ENCODE measurements at regions of chr1 and their contacts with region 1.

Region 1: GRCh38 chr1:153494976-153495535 is 34.6 kb upstream of the S100A7 start:
- DNase-seq: peak; percentile 54
- ATAC-seq: peak; percentile 90
- H3K4me3 ChIP-seq: no peak overlapping the region
- H3K27ac ChIP-seq: no peak overlapping the region
- H3K4me1 ChIP-seq: no peaks in the 10 kb centered on the region
- H3K27me3 ChIP-seq: peaks cover 3 to 5% of the 10 kb centered on the region in 2 experiments; a peak in 2 of 5 replicates
- CTCF ChIP-seq: peak; percentile 92
- EP300 ChIP-seq: no peak
- POLR2A ChIP-seq: no peak
- RAD21 ChIP-seq: peak; percentile 58; the same call in 1 of the 2 replicates

Region 2: GRCh38 chr1:153345187-153346076 is 149.6 kb before region 1 on chr1:
- CTCF ChIA-PET with region 1: no interaction called
- POLR2A ChIA-PET with region 1: no interaction called
- in situ Hi-C with region 1: loop called (anchors 5 kb)
- intact Hi-C with region 1: no loop called
- DNase-seq: no peak
- ATAC-seq: no peak
- H3K4me3 ChIP-seq: no peak overlapping the region
- H3K27ac ChIP-seq: no peak overlapping the region
- H3K4me1 ChIP-seq: no peaks in the 10 kb centered on the region
- H3K27me3 ChIP-seq: peaks cover 2 to 6% of the 10 kb centered on the region in 2 experiments; a peak in 2 of 5 replicates
- CTCF ChIP-seq: no peak
- EP300 ChIP-seq: no peak
- POLR2A ChIP-seq: no peak
- RAD21 ChIP-seq: no peak

Region 3: DNA sequence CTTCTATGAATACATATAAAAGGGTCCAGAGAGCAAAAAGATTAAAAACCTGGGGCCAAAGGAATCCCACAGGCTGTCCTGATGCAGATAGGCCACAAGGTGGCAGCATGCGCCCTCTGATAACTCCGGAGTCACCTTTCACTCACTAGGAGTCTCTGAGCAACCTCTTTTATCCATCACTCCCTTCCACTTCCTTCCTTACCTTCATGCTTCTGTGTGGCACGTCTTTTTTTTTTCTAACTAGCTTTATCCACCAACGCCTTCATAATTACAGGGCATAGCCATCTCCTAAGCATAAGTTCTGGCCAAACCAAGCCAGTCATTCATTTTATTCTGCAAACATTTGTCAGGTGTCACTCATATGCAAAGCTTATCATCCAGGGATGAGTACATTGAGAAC is 142.5 kb before region 1 on chr1:
- CTCF ChIA-PET with region 1: interaction called, 34 read pairs
- POLR2A ChIA-PET with region 1: no interaction called
- in situ Hi-C with region 1: loop called (anchors 5 kb)
- intact Hi-C with region 1: loop called (anchors 1 kb)
- DNase-seq: peak; percentile 52
- ATAC-seq: peak; percentile 58
- H3K4me3 ChIP-seq: no peak overlapping the region
- H3K27ac ChIP-seq: no peak overlapping the region
- H3K4me1 ChIP-seq: no peaks in the 10 kb centered on the region
- H3K27me3 ChIP-seq: peaks cover 0 to 2% of the 10 kb centered on the region in 2 experiments; a peak in 3 of 5 replicates
- CTCF ChIP-seq: peak; percentile 81
- EP300 ChIP-seq: no peak
- POLR2A ChIP-seq: no peak
- RAD21 ChIP-seq: peak; percentile 55

Region 4: DNA sequence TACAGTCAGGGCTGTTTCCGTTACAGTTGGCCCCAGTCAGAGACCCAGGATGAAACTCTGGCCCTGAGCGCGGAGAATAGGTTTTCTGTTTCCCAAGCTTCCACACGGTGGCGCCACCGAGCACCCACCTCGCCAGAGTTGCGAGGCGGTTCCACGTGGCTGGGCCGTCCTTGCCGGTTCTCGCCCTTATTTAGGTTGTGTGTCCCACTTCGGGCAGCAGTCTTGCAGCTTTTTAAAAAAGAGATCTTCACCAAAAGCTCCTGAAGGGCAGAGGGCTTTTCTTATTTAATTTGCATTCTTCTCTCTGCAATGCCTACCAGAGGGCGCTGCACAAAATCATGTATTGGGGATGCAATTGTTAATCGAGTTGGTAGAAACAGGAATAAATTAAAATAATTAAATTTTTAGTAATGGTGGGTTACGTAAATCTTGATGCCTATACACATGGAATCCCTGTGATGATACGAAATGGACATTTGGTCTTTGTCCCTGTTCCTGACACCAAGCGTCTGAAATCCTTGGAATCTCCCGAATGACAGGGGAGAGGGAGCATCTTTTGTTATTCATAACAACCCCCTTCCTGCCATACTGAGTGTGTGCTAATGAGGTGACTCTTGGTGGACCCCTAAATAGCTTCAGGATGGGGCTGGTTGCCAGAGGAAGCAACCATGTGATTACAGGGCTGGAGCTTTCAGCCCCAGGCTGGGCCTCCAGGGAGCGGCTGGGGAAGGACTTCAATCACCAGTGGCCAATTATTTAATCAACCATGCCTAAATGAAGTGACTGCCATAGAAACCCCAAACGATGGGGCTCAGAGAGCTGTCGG is 29.0 kb before region 1 on chr1:
- CTCF ChIA-PET with region 1: interaction called, 16 read pairs
- POLR2A ChIA-PET with region 1: no interaction called
- in situ Hi-C with region 1: no loop called
- intact Hi-C with region 1: loop called (anchors 1 kb)
- DNase-seq: peak; percentile 12
- ATAC-seq: peak; percentile 86
- H3K4me3 ChIP-seq: no peak overlapping the region
- H3K27ac ChIP-seq: no peak overlapping the region
- H3K4me1 ChIP-seq: no peaks in the 10 kb centered on the region
- H3K27me3 ChIP-seq: peaks cover 0 to 3% of the 10 kb centered on the region in 2 experiments; a peak in 1 of 5 replicates
- CTCF ChIP-seq: peak; percentile 74
- EP300 ChIP-seq: no peak
- POLR2A ChIP-seq: no peak
- RAD21 ChIP-seq: peak; percentile 49; the same call in 1 of the 2 replicates

Region 5: DNA sequence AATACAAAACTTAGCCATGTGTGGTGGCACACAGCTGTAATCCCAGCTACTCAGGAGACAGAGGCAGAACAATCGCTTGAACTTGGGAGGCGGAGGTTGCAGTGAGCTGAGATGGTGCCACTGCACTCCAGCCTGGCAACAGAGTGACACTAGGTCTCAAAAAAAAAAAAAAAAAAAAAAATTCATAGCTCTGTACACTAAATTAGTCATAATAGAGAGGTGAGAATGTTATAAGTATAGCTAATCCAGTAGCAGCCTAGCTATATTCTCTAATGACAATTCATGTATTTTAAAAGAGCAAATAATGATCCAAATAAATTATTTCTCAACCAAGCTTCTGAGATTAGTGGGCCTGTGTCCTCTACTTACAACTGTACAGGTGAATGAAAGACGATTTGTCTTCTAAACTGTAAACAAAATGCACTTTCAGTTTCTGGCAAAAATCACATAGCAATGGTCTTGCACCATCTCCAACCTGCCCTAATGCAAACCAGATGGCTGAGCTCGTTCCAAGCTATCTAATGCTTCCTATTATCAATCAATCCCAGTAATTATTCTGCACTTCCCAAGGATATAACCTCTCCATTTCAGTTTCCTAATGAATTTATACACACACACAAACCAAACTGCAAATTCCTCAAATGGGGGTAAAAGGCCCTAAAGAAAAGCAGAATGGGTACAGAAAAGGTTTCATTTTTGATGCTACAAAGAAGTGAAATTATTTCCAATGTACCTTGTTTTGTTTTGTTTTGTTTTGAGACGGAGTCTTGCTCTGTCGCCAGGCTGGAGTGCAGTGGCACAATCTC is 371.2 kb after region 1 on chr1:
- CTCF ChIA-PET with region 1: no interaction called
- POLR2A ChIA-PET with region 1: no interaction called
- in situ Hi-C with region 1: no loop called
- intact Hi-C with region 1: no loop called
- DNase-seq: no peak
- ATAC-seq: no peak
- H3K4me3 ChIP-seq: no peak overlapping the region
- H3K27ac ChIP-seq: no peak overlapping the region
- H3K4me1 ChIP-seq: peaks cover 10% of the 10 kb centered on the region
- H3K27me3 ChIP-seq: no peaks in the 10 kb centered on the region
- CTCF ChIP-seq: no peak
- EP300 ChIP-seq: no peak
- POLR2A ChIP-seq: no peak
- RAD21 ChIP-seq: no peak

Measured in HepG2 (cell line).